A549 (cell line): ENCODE measurements at regions of chr4 and their contacts with region 1.

Region 1: DNA sequence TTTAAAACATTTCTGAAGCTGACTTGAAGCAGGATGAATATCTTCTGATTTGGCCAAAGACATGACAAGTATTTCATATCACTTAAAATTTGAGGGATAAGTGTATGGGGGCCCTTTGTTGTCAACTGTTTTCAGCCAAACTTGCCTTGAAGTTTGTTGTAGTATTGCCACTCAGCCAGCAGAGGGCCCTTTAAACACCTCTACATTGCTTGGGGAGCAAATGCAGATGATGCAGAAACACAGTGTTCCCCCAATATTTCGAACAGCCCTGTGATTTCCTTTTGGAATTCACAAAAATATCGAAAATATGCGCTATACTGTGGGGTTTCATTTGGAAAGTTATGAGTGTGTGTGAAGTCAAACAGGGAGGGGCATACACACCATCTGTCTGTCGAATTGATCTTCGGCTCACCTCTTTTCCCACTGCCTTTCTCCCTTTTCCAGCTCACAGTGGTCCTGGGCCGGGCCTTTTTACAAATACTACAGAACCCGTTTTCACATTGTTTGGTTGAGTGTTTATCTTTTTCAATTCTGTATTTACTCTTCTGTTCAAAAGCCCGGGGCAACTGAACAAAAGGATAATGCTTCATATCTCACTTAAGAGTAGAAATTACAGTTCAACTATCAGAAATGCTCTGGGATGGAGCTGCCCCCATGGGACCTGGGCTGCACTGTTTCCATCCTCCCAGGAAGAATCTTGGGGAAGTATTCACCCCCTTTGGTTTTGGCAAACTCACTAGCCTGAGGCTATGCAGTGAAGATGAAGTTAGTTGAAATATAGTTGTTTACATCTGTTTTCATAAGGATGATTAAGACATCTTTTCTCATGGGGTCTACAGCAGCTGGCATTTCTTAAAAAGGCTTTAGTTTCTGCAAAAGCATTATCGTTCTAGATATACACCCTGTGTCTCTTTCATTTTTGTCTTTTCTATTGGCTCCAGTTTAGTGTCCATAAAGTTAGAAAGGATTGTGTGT is 137.6 kb downstream of the EGF start:
- DNase-seq: peak; percentile 8 to 34
- ATAC-seq: peak in 1 of 2 experiments; percentile 66; a peak in 3 of 6 replicates
- H3K4me3 ChIP-seq: no peak overlapping the region
- H3K27ac ChIP-seq: no peak overlapping the region
- H3K4me1 ChIP-seq: no peaks in the 10 kb centered on the region
- CTCF ChIP-seq: peak; percentile 69
- EP300 ChIP-seq: no peak
- POLR2A ChIP-seq: no peak
- RAD21 ChIP-seq: peak; percentile 66 to 69

Region 2: DNA sequence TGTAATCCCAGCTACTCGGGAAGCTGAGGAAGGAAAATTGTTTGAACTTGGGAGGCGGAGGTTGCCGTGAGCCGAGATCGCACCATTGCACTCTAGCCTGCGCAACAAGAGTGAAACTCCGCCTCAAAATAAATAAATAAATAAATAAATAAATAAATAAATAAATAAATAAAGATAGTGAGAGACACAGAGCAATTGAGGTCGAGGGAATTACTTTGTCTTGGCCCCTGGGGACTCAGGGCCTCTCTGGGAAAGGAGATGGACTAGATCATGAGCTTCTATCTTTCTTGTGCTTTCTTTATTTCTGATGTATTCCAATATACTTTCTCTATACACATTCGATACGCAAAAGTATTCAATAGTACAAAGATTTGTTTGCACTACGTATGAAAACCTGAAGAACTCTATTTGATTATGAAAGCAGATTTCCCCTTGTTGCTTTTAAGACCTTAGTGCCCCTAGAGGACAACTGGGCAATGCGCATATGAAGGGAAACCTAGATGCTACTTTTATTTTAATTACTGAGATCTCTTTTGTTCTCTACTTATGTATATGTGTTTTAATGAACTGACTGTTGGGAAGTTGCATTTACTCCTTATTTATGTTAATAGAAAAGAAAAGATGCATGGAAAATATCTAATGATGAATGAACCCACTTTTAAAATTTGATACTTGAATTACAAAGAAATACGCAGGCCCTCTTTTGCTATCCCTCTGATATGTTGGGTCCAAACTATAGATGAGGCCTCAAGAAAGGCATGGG is 160.9 kb after region 1 on chr4:
- CTCF ChIA-PET with region 1: interaction called, 17 read pairs
- POLR2A ChIA-PET with region 1: no interaction called
- DNase-seq: peak; percentile 28 to 52
- ATAC-seq: peak in 1 of 2 experiments; percentile 76; a peak in 3 of 6 replicates
- H3K4me3 ChIP-seq: no peak overlapping the region
- H3K27ac ChIP-seq: no peak overlapping the region
- H3K4me1 ChIP-seq: 0 out of 3 replicates have a peak, but pooled peaks cover 6% of the 10 kb centered on the region
- CTCF ChIP-seq: peak; percentile 56
- EP300 ChIP-seq: no peak
- POLR2A ChIP-seq: no peak
- RAD21 ChIP-seq: peak; percentile 56 to 67; a peak in 4 of 5 replicates

Region 3: DNA sequence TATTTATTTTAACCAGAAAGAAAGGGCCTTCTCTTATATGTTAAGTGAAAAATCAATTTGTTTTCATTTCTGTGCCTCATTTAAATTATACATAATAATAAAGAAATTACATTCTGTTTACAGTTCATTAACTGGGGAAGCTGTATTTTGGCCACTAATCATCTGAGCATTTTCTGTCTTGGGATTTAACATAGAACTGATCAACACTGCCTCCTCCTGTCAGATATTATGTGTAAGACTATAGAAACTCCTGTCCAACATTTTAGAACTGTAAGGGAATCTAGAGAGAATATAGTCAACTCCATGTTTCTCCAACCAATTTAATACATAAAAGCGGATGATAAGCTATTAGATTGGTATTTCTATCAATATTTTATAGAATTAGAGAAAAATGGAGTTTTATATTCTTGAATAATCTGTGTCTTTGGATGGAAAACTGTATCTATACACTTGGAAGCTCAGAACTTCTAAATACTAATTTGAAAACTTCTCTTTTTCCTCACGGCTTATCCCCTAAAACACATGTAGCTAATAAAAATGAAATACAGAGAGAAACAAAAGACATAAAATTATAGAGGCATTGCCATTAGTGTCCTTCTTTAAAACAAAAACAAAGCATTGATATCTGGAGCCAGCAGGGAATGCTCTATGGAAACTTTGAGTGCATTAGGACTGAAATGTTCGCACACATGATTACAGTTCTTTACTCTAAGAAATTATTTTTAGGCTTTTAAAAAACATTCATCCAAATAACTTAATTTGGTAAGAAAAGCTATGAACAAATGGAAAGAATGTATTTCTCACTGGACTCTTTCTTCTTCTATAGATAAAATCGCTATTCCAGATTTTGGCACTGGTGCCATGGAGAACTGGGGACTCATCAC is 458.8 kb after region 1 on chr4:
- CTCF ChIA-PET with region 1: interaction called, 11 read pairs
- POLR2A ChIA-PET with region 1: no interaction called
- DNase-seq: peak in 1 of 2 experiments; percentile 17
- ATAC-seq: peak in 1 of 2 experiments; percentile 57; a peak in 3 of 6 replicates
- H3K4me3 ChIP-seq: no peak overlapping the region
- H3K27ac ChIP-seq: no peak overlapping the region
- H3K4me1 ChIP-seq: no peaks in the 10 kb centered on the region
- CTCF ChIP-seq: peak; percentile 39
- EP300 ChIP-seq: no peak
- POLR2A ChIP-seq: no peak
- RAD21 ChIP-seq: peak; percentile 44 to 45; a peak in 4 of 5 replicates